ENCODE measurements at regions of chr5 and their contacts with region 1.

Region 1: GRCh38 chr5:160439205-160439600 is 17.5 kb downstream of the PTTG1 start:
- DNase-seq: peak; percentile 89
- ATAC-seq: peak; percentile 75
- H3K4me3 ChIP-seq: peak overlapping the region; percentile 70
- H3K27ac ChIP-seq: peak overlapping the region; percentile 82
- H3K4me1 ChIP-seq: peaks cover 54% of the 10 kb centered on the region
- H3K27me3 ChIP-seq: no peaks in the 10 kb centered on the region
- CTCF ChIP-seq: peak; percentile 83 to 95 (median 88)
- EP300 ChIP-seq: no peak; a peak in 1 of 4 replicates
- POLR2A ChIP-seq: peak; percentile 50; the same call in 1 of the 2 replicates
- RAD21 ChIP-seq: peak; percentile 84

Region 2: GRCh38 chr5:159581502-159582249 is 857.5 kb before region 1 on chr5:
- CTCF ChIA-PET with region 1: no interaction called
- POLR2A ChIA-PET with region 1: no interaction called
- RAD21 ChIA-PET with region 1: no interaction called
- SMC1A ChIA-PET with region 1: no interaction called
- in situ Hi-C with region 1: no loop called
- intact Hi-C with region 1: no loop called
- DNase-seq: no peak
- ATAC-seq: no peak
- H3K4me3 ChIP-seq: no peak overlapping the region
- H3K27ac ChIP-seq: no peak overlapping the region
- H3K4me1 ChIP-seq: no peaks in the 10 kb centered on the region
- H3K27me3 ChIP-seq: no peaks in the 10 kb centered on the region
- CTCF ChIP-seq: no peak
- EP300 ChIP-seq: no peak
- POLR2A ChIP-seq: no peak
- RAD21 ChIP-seq: no peak

Region 3: GRCh38 chr5:160452795-160453194 is 13.6 kb after region 1 on chr5:
- CTCF ChIA-PET with region 1: interaction called, 127 read pairs
- POLR2A ChIA-PET with region 1: interaction called, 97 read pairs
- RAD21 ChIA-PET with region 1: interaction called, 152 read pairs
- SMC1A ChIA-PET with region 1: interaction called, 511 read pairs
- in situ Hi-C with region 1: no loop called
- intact Hi-C with region 1: no loop called
- DNase-seq: no peak
- ATAC-seq: peak; percentile 7; the same call in 1 of the 3 replicates
- H3K4me3 ChIP-seq: no peak overlapping the region
- H3K27ac ChIP-seq: peak overlapping the region; percentile 29
- H3K4me1 ChIP-seq: peaks cover 55% of the 10 kb centered on the region
- H3K27me3 ChIP-seq: no peaks in the 10 kb centered on the region
- CTCF ChIP-seq: no peak
- EP300 ChIP-seq: 0 out of 4 replicates have a peak, but pooled peaks of 1 of the 2 experiments have one; percentile 9
- POLR2A ChIP-seq: no peak
- RAD21 ChIP-seq: no peak

Region 4: DNA sequence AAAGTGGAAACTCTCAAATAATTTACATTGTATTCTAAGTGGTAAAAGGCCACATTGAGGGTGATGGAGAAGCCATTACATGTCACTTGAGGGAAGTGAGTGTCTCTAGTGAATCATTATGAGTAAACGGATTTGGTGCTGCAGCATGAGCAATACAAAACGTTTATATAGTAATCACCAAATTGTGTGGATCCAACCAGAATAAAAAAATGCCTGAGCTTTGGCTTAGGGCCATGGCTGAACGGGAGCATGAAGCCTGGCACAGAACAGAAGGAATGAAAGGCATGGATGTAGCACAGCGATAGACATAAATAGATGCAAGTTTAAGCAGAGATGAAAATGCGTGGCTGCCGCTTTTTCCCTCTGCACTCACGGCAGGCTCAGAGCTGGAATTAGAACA is 40.7 kb after region 1 on chr5:
- CTCF ChIA-PET with region 1: interaction called, 209 read pairs
- POLR2A ChIA-PET with region 1: interaction called, 26 read pairs
- RAD21 ChIA-PET with region 1: interaction called, 107 read pairs
- SMC1A ChIA-PET with region 1: interaction called, 219 read pairs
- in situ Hi-C with region 1: loop called (anchors 5 kb)
- intact Hi-C with region 1: no loop called
- DNase-seq: no peak
- ATAC-seq: peak; percentile 8; the same call in 2 of the 3 replicates
- H3K4me3 ChIP-seq: no peak overlapping the region
- H3K27ac ChIP-seq: no peak overlapping the region
- H3K4me1 ChIP-seq: peaks cover 13% of the 10 kb centered on the region; the same call in 1 of the 2 replicates
- H3K27me3 ChIP-seq: no peaks in the 10 kb centered on the region
- CTCF ChIP-seq: no peak
- EP300 ChIP-seq: no peak
- POLR2A ChIP-seq: no peak
- RAD21 ChIP-seq: no peak

Region 5: GRCh38 chr5:160508780-160509361 is 69.7 kb after region 1 on chr5:
- CTCF ChIA-PET with region 1: interaction called, 235 read pairs
- POLR2A ChIA-PET with region 1: interaction called, 13 read pairs
- RAD21 ChIA-PET with region 1: interaction called, 162 read pairs
- SMC1A ChIA-PET with region 1: interaction called, 205 read pairs
- in situ Hi-C with region 1: no loop called
- intact Hi-C with region 1: loop called (anchors 1 kb)
- DNase-seq: peak; percentile 76
- ATAC-seq: peak; percentile 88
- H3K4me3 ChIP-seq: no peak overlapping the region
- H3K27ac ChIP-seq: no peak overlapping the region
- H3K4me1 ChIP-seq: peaks cover 15% of the 10 kb centered on the region; the same call in 1 of the 2 replicates
- H3K27me3 ChIP-seq: no peaks in the 10 kb centered on the region
- CTCF ChIP-seq: peak; percentile 76 to 94 (median 92)
- EP300 ChIP-seq: no peak
- POLR2A ChIP-seq: no peak
- RAD21 ChIP-seq: peak; percentile 99

Region 6: DNA sequence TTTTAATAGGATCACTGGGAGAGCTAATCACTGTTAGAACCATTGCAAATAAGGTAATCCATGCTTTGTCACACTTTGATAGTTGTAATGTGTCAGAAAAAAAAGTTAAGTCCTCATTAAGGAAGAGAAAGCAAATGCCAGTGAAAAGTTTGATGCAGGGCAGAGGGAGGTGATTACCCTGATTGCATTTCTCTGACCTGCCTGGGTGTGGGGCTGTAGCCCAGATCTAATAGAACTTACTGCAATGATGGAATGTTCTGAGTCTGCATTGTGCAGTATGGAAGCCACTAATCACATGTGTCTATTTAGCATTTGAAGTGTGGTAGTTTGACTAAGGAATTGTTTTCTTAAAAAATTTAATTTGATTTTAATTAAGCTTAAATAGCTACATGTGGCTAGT is 210.1 kb after region 1 on chr5:
- CTCF ChIA-PET with region 1: interaction called, 23 read pairs
- POLR2A ChIA-PET with region 1: no interaction called
- RAD21 ChIA-PET with region 1: interaction called, 4 read pairs
- SMC1A ChIA-PET with region 1: interaction called, 19 read pairs
- in situ Hi-C with region 1: no loop called
- intact Hi-C with region 1: loop called (anchors 10 kb)
- DNase-seq: no peak
- ATAC-seq: peak; percentile 84
- H3K4me3 ChIP-seq: no peak overlapping the region
- H3K27ac ChIP-seq: no peak overlapping the region
- H3K4me1 ChIP-seq: no peaks in the 10 kb centered on the region
- H3K27me3 ChIP-seq: no peaks in the 10 kb centered on the region
- CTCF ChIP-seq: peak; percentile 36 to 45 (median 39); a peak in 4 of 6 replicates
- EP300 ChIP-seq: no peak
- POLR2A ChIP-seq: no peak
- RAD21 ChIP-seq: peak; percentile 45

Region 7: DNA sequence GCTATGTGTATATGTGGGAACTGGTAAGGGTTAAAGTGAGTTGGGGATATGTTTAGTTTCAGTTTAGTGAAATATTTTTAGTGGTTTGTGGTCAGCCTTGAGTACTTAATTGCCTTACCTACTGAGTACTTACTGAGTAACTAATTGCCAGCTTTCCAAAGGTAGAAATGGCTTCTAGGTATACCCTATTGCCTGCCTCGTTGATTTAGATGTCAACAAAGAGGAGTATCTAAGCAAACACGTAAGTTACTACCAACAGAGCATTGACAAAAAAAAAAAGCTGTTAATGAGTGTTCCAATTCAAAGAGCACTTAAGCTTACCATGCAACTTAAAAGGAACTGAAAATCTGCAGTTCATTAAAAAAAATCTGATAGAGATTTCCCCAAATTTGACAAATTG is 404.0 kb after region 1 on chr5:
- CTCF ChIA-PET with region 1: interaction called, 7 read pairs
- POLR2A ChIA-PET with region 1: interaction called, 4 read pairs
- RAD21 ChIA-PET with region 1: interaction called, 16 read pairs
- SMC1A ChIA-PET with region 1: interaction called, 17 read pairs
- in situ Hi-C with region 1: no loop called
- intact Hi-C with region 1: loop called (anchors 5 kb)
- DNase-seq: peak; percentile 89
- ATAC-seq: peak; percentile 99
- H3K4me3 ChIP-seq: 0 out of 2 replicates have a peak overlapping the region, but pooled peaks have one; percentile 25
- H3K27ac ChIP-seq: no peak overlapping the region
- H3K4me1 ChIP-seq: no peaks in the 10 kb centered on the region
- H3K27me3 ChIP-seq: no peaks in the 10 kb centered on the region
- CTCF ChIP-seq: no peak
- EP300 ChIP-seq: peak; percentile 92 to 94
- POLR2A ChIP-seq: no peak
- RAD21 ChIP-seq: no peak